Sciatic nerve (tissue), 2 donors: ENCODE measurements at regions of chr2 and their contacts with region 1.

Region 1: DNA sequence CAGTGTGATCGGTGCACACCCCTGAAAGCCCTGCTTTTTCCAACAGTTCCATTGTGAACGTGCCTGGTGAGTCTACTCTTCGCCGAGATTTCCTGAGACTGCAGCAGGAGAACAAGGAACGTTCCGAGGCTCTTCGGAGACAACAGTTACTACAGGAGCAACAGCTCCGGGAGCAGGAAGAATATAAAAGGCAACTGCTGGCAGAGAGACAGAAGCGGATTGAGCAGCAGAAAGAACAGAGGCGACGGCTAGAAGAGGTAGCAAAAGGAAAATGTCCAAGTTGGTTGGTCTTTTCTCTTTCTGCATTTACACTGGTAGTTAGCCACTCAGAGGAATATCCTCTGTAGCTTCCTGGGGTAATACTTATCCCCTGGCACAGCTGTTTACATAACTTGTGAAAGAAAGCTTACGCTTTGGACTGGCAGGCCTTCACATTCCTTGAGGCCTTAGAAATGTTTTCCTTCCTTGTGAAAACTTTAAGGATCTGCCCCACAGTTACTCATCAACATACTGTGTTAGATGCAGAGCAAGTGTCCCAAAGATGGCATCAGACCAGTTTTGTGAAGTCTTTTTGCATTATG is 146.6 kb downstream of the MAP4K4 start:
- DNase-seq: no peak
- ATAC-seq: no peak

Region 2: GRCh38 chr2:101657787-101658186 is 186.4 kb before region 1 on chr2:
- intact Hi-C with region 1: no loop called
- DNase-seq: no peak
- ATAC-seq: no peak

Region 3: DNA sequence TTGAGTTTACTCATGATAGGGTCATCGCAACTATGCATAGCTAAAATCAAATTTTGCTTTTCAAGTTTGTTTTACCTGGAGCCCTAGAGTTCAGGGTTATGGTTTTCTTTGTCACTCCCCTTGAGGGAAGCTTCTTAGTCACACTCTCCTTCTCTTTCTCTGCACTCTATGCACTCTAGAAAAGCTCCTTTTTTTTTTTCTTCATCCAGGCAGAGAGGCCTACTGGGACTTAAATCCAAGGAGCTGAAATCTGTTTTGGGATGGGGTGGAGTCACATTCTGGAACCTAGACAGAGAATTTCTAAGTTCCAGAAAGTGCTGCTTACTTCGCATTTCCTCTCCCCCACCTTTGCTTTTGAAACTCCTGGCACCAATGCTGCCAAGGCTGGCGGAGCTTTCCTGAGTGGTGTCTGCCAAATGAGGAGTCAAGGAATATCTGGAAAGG is 492.4 kb after region 1 on chr2:
- intact Hi-C with region 1: no loop called
- DNase-seq: no peak
- ATAC-seq: peak; percentile 17

Region 4: GRCh38 chr2:102726128-102727087 is 882.3 kb after region 1 on chr2:
- intact Hi-C with region 1: loop called (anchors 10 kb)
- DNase-seq: no peak
- ATAC-seq: peak; percentile 56